HEK293 (cell line): ENCODE measurements at regions of chr12 and their contacts with region 1.

Region 1: GRCh38 chr12:121334513-121335343 is 17.5 kb downstream of the ANAPC5 start:
- H3K4me3 ChIP-seq: no peak overlapping the region
- H3K27ac ChIP-seq: no peak overlapping the region
- H3K4me1 ChIP-seq: no peaks in the 10 kb centered on the region
- CTCF ChIP-seq: peak; percentile 41; the same call in 1 of the 2 replicates

Region 2: DNA sequence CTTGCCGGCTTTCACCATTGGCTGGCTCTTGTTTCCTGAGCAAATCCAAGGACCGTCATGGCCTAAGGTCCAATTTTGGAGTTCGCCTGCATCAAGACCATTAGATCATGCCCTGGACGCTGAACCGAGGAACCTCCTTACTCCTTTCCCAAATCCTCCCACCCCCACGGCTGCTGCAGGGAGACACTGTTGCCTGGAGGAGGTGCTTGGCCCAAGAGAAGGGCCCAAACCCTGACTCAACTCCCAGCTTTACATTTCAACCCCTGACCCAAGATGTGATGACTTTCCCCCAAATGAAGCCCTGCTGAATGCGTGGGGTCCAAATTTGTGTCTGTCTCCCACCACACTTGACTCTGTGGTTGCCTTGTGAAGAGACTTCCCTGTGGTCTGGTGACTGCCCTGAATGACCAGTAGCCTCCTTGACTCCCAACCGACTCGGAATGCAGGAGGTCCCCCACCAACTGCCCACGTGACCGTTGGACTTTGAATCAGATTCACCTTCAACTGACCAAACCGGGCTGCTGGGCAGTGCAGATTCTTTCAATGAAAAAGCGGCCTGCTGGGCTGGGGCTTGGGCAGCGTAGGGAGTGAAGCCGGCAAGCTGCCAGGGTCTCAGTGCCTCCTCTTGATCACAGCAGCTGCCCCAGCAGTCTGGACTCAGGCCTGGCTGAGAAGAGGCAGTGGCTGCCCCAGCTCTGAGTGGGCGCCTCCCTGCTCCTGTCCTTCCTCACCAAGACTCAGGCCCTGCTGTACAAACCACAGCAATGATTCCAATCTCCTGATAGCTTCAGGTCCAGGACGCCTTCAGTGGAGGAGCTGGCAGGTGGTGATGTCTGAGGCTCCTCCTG is 249.0 kb before region 1 on chr12:
- CTCF ChIA-PET with region 1: no interaction called
- POLR2A ChIA-PET with region 1: no interaction called
- H3K4me3 ChIP-seq: no peak overlapping the region
- H3K27ac ChIP-seq: no peak overlapping the region
- H3K4me1 ChIP-seq: no peaks in the 10 kb centered on the region
- CTCF ChIP-seq: no peak

Region 3: DNA sequence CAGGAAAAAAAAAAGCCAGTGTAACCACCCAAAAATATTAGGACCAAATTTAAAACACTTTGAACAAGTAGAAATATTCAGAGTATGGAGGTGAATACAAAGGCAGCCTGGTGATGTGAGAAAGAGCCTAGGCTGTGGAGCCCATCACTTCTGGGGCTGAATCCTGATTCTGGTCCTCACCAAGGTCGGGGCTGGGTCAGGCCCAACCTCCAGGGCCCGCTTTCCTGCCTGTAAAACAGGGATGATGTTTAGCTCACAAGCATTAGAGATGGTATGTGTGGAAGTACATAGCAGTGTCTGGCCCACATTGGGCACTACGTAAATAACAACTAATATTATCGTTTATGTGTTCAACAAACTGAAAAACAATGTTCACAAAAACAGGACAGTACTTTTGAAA is 30.4 kb before region 1 on chr12:
- CTCF ChIA-PET with region 1: interaction called, 14 read pairs
- POLR2A ChIA-PET with region 1: no interaction called
- H3K4me3 ChIP-seq: no peak overlapping the region
- H3K27ac ChIP-seq: no peak overlapping the region
- H3K4me1 ChIP-seq: no peaks in the 10 kb centered on the region
- CTCF ChIP-seq: no peak

Region 4: GRCh38 chr12:121318121-121318520 is 16.6 kb before region 1 on chr12:
- CTCF ChIA-PET with region 1: interaction called, 37 read pairs
- POLR2A ChIA-PET with region 1: interaction called, 4 read pairs
- H3K4me3 ChIP-seq: no peak overlapping the region
- H3K27ac ChIP-seq: no peak overlapping the region
- H3K4me1 ChIP-seq: no peaks in the 10 kb centered on the region
- CTCF ChIP-seq: no peak

Region 5: GRCh38 chr12:121345151-121345815 is 10.6 kb after region 1 on chr12:
- CTCF ChIA-PET with region 1: interaction called, 30 read pairs
- POLR2A ChIA-PET with region 1: no interaction called
- H3K4me3 ChIP-seq: no peak overlapping the region
- H3K27ac ChIP-seq: no peak overlapping the region
- H3K4me1 ChIP-seq: no peaks in the 10 kb centered on the region
- CTCF ChIP-seq: no peak

Region 6: GRCh38 chr12:121351820-121352681 is 17.3 kb after region 1 on chr12 and contains the start of gene ANAPC5:
- CTCF ChIA-PET with region 1: interaction called, 33 read pairs
- POLR2A ChIA-PET with region 1: interaction called, 12 read pairs
- H3K4me3 ChIP-seq: peak within 1 kb of the TSS; percentile 93
- H3K27ac ChIP-seq: peak within 1 kb of the TSS; percentile 72
- H3K4me1 ChIP-seq: no peaks in the 10 kb centered on the region
- CTCF ChIP-seq: peak; percentile 62; the same call in 1 of the 2 replicates

Region 7: GRCh38 chr12:121443193-121443870 is 108.6 kb after region 1 on chr12:
- CTCF ChIA-PET with region 1: interaction called, 58 read pairs
- POLR2A ChIA-PET with region 1: no interaction called
- H3K4me3 ChIP-seq: no peak overlapping the region
- H3K27ac ChIP-seq: no peak overlapping the region
- H3K4me1 ChIP-seq: no peaks in the 10 kb centered on the region
- CTCF ChIP-seq: peak; percentile 86